Activated CD4-positive, alpha-beta memory T cell treated with anti-CD3 and anti-CD28 coated beads for 36 hours (primary cell): ENCODE measurements at regions of chr6 and their contacts with region 1.

Region 1: DNA sequence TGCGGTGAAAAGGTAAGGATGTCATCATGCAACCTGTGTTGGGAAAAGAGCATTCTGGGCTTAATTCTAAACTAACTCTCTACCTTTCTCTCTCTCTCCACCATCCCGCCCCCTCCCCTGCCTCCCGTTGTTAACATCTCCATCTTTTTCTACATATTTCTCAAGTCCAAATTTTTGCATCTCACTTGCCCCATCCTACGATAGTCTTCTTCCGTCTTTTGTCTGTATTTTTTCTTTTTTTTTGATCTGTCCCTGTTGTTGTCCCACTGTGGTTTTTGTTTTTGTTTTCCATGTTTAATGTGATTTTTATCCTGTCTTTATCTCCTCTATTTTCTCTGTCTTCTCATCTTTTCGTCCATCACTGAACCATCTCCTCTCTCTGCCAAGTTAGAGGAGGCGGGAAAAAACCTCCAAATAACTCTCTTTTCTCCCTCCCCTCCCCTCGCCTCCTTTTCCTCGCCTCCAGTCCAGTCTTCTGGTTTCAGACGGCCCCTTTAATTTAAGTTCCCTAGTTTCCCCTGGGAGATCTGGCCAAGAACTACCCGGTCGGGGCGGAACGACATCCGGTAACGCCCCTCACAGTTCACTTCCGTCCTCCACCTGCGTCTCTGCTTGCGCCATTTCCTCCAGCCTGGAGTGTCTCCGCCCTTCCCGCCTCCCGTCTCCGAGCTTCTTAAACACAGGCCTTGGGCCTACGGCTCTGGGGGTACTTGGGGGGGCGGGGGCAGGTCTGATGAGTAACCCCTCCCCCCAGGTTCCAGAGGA is at the start of gene NFKBIL1:
- DNase-seq: peak; percentile 96
- H3K4me3 Mint-ChIP-seq: peak within 1 kb of the TSS; percentile 76
- H3K27ac Mint-ChIP-seq: peak within 1 kb of the TSS; percentile 89
- H3K4me1 Mint-ChIP-seq: peaks cover 44% of the 10 kb centered on the region
- H3K27me3 Mint-ChIP-seq: no peaks in the 10 kb centered on the region
- total RNA-seq, gene NFKBIL1: 18.5 to 21.5 TPM

Region 2: DNA sequence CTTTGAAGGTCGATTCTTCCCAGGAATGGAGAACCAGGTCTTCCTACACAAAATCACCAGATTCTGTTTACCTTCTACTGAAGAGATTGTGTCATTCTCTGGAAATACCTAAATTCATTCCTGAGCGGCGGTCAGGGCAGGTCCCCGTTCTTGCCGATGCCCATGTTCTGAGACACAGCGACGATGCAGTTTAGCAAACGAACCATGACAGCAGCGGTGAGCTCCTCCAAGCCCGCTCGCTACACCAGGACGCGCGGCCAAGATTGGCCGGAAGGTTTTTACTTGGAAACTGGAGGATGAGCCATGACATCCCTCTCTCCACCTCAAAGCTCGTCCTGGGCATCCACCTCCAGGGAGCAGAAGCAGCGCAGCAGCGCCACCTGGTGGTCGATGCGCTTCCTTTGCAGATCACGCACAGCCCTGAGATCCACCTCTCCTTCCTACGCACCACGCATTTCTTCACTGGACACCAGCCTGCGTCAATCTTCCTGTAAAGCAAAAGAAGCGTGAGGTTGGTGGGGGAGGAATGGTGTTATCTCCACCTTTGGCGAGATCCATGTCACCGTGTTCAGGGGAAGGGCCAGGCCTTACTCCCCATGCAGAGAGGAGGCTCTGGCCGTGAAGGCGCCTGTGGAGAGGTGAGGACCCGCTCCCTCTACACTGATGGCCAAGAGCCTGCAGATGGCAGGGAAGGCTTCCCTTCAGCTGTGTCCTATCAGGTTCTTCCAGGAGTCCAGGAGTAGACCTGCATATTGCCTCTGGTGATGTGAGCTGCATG is 180.3 kb before region 1 on chr6:
- CTCF ChIA-PET with region 1: no interaction called
- POLR2A ChIA-PET with region 1: no interaction called
- intact Hi-C with region 1: no loop called
- DNase-seq: peak; percentile 89
- H3K4me3 Mint-ChIP-seq: peak overlapping the region; percentile 75
- H3K27ac Mint-ChIP-seq: peak overlapping the region; percentile 25
- H3K4me1 Mint-ChIP-seq: peaks cover 23% of the 10 kb centered on the region
- H3K27me3 Mint-ChIP-seq: peaks cover 10% of the 10 kb centered on the region

Region 3: DNA sequence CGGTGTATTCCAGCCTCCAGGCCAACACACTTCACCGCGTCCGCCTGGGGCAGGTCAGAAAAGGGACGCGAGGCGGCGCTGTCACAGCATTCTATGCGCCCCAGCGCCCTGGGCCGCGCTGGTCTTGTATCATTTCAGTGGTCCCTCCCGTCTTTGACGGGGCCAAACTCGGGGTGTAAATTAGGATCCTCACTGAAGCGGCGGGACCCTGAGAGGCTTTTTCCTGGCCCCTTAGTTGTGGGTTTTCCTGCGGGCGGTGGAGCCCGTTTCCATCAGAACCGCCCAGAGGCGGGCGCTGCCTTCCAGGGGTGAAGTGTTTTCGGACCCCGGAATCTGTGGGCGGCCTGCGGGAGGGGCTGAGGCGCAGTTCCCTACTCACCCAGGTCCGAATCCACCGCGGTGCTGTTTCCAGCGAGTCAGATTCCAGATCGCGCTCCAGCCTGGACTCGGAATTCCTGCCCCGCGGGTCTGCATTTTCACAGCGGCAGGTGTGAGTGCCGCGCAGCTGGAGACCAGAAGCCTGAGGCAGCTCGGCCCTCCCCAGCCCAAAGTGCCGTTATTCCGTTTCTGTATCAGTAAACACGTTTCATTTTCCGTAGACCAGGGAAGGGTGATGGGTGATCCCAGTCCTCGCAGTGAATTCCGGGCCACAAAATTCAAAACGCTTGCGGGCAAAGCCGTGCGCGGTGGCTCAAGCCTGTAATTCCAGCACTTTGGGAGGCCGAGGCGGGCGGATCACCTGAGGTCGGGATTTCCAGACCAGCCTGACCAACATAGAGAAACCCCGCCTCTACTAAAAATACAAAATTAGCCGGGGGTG is 53.1 kb before region 1 on chr6:
- CTCF ChIA-PET with region 1: interaction called, 68 read pairs
- POLR2A ChIA-PET with region 1: interaction called, 20 read pairs
- intact Hi-C with region 1: loop called (anchors 1 kb)
- DNase-seq: peak; percentile 89
- H3K4me3 Mint-ChIP-seq: peak overlapping the region; percentile 90
- H3K27ac Mint-ChIP-seq: peak overlapping the region; percentile 94
- H3K4me1 Mint-ChIP-seq: peaks cover 42% of the 10 kb centered on the region
- H3K27me3 Mint-ChIP-seq: no peaks in the 10 kb centered on the region

Region 4: GRCh38 chr6:31513456-31514165 is 33.5 kb before region 1 on chr6:
- CTCF ChIA-PET with region 1: no interaction called
- POLR2A ChIA-PET with region 1: no interaction called
- intact Hi-C with region 1: no loop called
- DNase-seq: no peak
- H3K4me3 Mint-ChIP-seq: no peak overlapping the region
- H3K27ac Mint-ChIP-seq: no peak overlapping the region
- H3K4me1 Mint-ChIP-seq: no peaks in the 10 kb centered on the region
- H3K27me3 Mint-ChIP-seq: no peaks in the 10 kb centered on the region

Region 5: DNA sequence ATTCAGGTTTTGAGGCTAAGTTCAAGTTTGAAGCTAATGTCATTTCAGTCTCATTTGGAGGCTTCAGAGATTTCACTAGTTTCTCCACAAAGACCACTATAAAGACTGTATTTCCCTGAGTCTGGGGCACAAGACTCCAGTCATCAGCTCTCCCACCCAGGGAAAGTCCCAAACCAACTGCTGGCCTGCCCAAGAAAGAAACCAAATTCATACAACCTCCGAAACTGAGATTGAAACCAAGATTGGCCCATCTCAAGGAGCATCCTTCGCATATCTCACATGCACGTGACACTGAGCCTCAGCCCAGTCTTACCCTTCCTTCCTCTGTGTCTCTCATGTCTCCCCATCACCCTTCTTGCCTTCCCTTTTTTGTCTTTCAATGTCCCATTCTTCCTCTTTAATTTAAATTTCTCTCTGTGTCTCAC is 21.4 kb after region 1 on chr6:
- CTCF ChIA-PET with region 1: interaction called, 1,658 read pairs
- POLR2A ChIA-PET with region 1: interaction called, 125 read pairs
- intact Hi-C with region 1: loop called (anchors 1 kb)
- DNase-seq: peak; percentile 86
- H3K4me3 Mint-ChIP-seq: peak overlapping the region; percentile 35
- H3K27ac Mint-ChIP-seq: peak overlapping the region; percentile 72
- H3K4me1 Mint-ChIP-seq: peaks cover 72% of the 10 kb centered on the region
- H3K27me3 Mint-ChIP-seq: no peaks in the 10 kb centered on the region

Region 6: GRCh38 chr6:31580807-31581433 is 33.8 kb after region 1 on chr6:
- CTCF ChIA-PET with region 1: interaction called, 1,658 read pairs
- POLR2A ChIA-PET with region 1: interaction called, 125 read pairs
- intact Hi-C with region 1: loop called (anchors 2 kb)
- DNase-seq: peak; percentile 92
- H3K4me3 Mint-ChIP-seq: peak overlapping the region; percentile 97
- H3K27ac Mint-ChIP-seq: peak overlapping the region; percentile 92
- H3K4me1 Mint-ChIP-seq: peaks cover 44% of the 10 kb centered on the region
- H3K27me3 Mint-ChIP-seq: no peaks in the 10 kb centered on the region

Region 7: GRCh38 chr6:31619805-31620585 is 72.9 kb after region 1 on chr6:
- CTCF ChIA-PET with region 1: interaction called, 9 read pairs
- POLR2A ChIA-PET with region 1: interaction called, 8 read pairs
- intact Hi-C with region 1: loop called (anchors 1 kb)
- DNase-seq: peak; percentile 98
- H3K4me3 Mint-ChIP-seq: peak overlapping the region; percentile 91
- H3K27ac Mint-ChIP-seq: peak overlapping the region; percentile 98
- H3K4me1 Mint-ChIP-seq: peaks cover 47% of the 10 kb centered on the region
- H3K27me3 Mint-ChIP-seq: no peaks in the 10 kb centered on the region

Region 8: DNA sequence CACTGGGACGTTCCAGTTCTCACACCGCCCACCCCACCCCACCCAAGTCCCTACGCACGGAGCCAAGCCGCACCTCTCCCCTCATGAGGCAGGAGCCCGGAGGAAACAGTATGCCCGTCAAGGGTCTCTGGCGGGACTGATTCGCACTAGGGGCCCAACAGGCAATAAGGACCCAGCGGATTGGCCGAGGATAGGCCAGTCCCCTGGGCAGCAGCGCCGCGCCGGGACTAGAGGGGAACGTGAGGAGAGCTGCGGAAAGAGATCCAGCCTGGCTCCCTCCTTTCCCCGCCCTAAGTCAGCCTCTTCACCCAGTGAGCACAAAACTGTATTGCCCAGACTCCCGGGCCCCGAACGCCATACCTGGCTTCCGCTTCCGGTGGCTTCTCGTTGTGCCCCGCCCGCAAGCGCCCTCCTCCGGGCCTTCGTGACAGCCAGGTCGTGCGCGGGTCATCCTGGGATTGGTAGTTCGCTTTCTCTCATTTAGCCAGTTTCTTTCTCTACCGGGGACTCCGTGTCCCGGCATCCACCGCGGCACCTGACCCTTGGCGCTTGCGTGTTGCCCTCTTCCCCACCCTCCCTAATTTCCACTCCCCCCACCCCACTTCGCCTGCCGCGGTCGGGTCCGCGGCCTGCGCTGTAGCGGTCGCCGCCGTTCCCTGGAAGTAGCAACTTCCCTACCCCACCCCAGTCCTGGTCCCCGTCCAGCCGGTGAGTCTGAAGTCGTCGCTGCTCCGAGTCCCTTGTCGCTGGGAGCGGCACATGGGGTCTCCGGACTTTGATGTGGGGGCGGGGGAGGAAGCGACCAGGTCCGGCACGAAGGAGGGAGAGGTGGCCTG is 118.6 kb after region 1 on chr6 and contains the start of gene CSNK2B:
- CTCF ChIA-PET with region 1: interaction called, 3 read pairs
- POLR2A ChIA-PET with region 1: no interaction called
- intact Hi-C with region 1: loop called (anchors 1 kb)
- DNase-seq: peak; percentile 99
- H3K4me3 Mint-ChIP-seq: peak within 1 kb of the TSS; percentile 88
- H3K27ac Mint-ChIP-seq: peak within 1 kb of the TSS; percentile 95
- H3K4me1 Mint-ChIP-seq: peaks cover 61% of the 10 kb centered on the region
- H3K27me3 Mint-ChIP-seq: no peaks in the 10 kb centered on the region
- total RNA-seq, gene CSNK2B: 227 to 234 TPM